ENCODE measurements at regions of chr10 and their contacts with region 1.

Region 1: GRCh38 chr10:31656851-31657433 is 271.7 kb downstream of the ARHGAP12 start:
- DNase-seq: no peak
- H3K4me3 ChIP-seq: no peak overlapping the region
- H3K27ac ChIP-seq: peak overlapping the region in 1 of 2 donors; percentile 16
- H3K4me1 ChIP-seq: no peaks in the 10 kb centered on the region
- H3K27me3 ChIP-seq: no peaks in the 10 kb centered on the region
- CTCF ChIP-seq: no peak
- EP300 ChIP-seq: no peak
- POLR2A ChIP-seq: no peak

Region 2: GRCh38 chr10:31745612-31746376 is 88.9 kb after region 1 on chr10:
- intact Hi-C with region 1: loop called in 1 of 4 experiments (anchors 5 kb)
- DNase-seq: no peak
- H3K4me3 ChIP-seq: no peak overlapping the region
- H3K27ac ChIP-seq: no peak overlapping the region
- H3K4me1 ChIP-seq: peaks cover 8% of the 10 kb centered on the region
- H3K27me3 ChIP-seq: no peaks in the 10 kb centered on the region
- CTCF ChIP-seq: no peak
- EP300 ChIP-seq: no peak
- POLR2A ChIP-seq: no peak

Region 3: DNA sequence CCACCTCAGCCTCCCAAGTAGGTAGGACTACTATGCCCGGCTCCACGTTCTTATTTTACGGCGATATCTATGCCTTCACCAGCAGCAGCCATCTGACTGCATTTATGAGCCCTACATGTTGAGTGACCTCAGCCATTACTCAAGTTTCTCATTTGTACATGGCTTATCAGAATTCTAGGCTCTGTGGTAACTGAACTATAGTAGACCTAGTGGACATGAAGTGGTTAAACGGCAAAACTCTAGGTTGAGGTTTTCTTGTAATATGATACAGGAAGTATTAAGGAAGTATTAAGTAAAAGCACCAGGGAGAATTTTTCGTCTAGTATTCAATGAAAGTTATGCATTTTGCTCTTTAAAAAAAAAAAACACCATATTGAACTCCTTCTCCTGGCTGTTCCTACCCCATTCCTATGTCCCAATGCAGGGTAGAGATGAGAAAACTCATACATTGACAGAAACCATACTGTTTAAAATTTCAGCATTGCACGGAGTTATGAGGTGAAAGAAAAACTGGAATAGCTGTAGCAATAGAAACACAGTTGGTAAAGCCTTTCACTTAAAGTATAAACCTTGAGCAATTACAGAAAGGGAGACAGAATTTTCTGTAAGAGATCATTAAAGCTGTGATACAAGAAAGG is 729.8 kb after region 1 on chr10:
- intact Hi-C with region 1: no loop called
- DNase-seq: no peak
- H3K4me3 ChIP-seq: no peak overlapping the region
- H3K27ac ChIP-seq: no peak overlapping the region
- H3K4me1 ChIP-seq: peaks cover 2% of the 10 kb centered on the region
- H3K27me3 ChIP-seq: no peaks in the 10 kb centered on the region
- CTCF ChIP-seq: no peak
- EP300 ChIP-seq: no peak
- POLR2A ChIP-seq: no peak

Measured in ovary (tissue), 10 donors.